ENCODE measurements at regions of chr5 and their contacts with region 1.

Region 1: GRCh38 chr5:142403571-142403971 is 78.8 kb upstream of the SPRY4 start:
- DNase-seq: no peak
- H3K4me3 ChIP-seq: no peak overlapping the region
- H3K27ac ChIP-seq: no peak overlapping the region
- H3K4me1 ChIP-seq: peaks cover 0 to 3% (median 2%) of the 10 kb centered on the region in 4 donors
- H3K27me3 ChIP-seq: no peaks in the 10 kb centered on the region
- CTCF ChIP-seq: no peak
- EP300 ChIP-seq: no peak
- POLR2A ChIP-seq: no peak

Region 2: DNA sequence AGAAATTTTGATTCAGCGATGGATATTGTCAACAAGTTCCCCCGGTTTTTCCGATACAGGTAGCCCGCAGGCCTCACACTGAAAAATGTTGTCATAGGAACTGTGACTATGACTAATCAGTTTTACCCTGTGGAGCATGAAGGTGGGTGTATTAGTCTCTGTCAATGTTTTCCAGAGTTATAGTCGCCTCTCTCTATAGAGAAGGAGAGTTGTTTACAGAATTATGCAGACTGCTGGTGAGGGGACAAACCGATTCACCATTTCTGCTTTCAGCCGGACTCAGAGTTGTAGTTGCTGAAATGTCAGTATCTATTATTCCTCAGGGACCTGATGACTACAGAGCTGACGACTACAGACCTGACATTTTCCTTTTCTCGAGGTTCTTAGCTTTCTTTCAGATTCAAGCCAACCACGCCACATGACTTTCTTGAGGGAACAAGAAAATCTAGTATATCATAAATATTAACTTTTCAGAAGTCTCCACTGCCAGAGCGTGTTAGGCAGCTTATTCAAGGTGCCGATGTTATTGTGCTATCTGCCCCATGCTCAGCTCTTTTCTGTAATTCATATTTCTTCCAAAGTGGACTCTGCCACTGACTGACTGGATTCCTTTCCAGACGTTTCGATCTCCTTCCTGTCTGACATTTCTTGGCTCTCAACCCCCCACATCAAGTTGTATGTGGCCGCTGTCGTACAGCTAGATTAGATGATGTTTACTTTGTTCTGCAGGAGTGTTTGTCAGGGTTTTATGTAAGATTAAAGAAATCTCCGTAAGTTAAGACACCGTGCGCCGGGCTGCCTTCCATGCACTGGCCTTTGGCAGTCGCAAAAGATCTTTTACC is 104.2 kb after region 1 on chr5:
- in situ Hi-C with region 1: no loop called
- intact Hi-C with region 1: loop called (anchors 10 kb)
- DNase-seq: no peak
- H3K4me3 ChIP-seq: no peak overlapping the region
- H3K27ac ChIP-seq: no peak overlapping the region
- H3K4me1 ChIP-seq: peaks cover 0 to 11% (median 0%) of the 10 kb centered on the region in 4 donors
- H3K27me3 ChIP-seq: no peaks in the 10 kb centered on the region
- CTCF ChIP-seq: no peak
- EP300 ChIP-seq: no peak
- POLR2A ChIP-seq: no peak

Region 3: DNA sequence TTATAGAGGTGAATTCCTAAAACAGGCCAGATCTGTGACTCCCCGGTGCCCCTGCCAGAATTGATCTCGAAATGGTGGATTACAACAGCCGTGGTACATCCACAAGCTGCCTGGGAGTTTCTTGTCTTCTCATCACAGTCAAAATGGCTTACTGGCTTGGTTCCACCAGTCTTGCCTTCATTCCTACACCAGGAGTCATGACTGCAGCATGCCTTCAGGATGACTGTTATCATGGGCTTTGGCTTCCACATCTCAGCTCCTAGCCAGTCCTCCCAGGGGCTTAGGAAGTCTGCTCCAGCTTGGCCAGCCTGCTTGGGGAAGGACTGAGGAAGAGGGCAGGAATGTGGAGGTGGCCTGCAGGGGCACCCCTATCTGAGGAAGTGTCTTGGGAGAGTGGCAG is 1132.8 kb after region 1 on chr5:
- in situ Hi-C with region 1: no loop called
- intact Hi-C with region 1: no loop called
- DNase-seq: no peak
- H3K4me3 ChIP-seq: no peak overlapping the region
- H3K27ac ChIP-seq: no peak overlapping the region
- H3K4me1 ChIP-seq: no peaks in the 10 kb centered on the region
- H3K27me3 ChIP-seq: no peaks in the 10 kb centered on the region
- CTCF ChIP-seq: no peak
- EP300 ChIP-seq: no peak
- POLR2A ChIP-seq: no peak